Caco-2 (cell line): ENCODE measurements at regions of chr6 and their contacts with region 1.

Region 1: GRCh38 chr6:43798688-43799444 is 28.9 kb downstream of the VEGFA start:
- DNase-seq: peak; percentile 92 to 95
- H3K4me3 ChIP-seq: no peak overlapping the region
- H3K4me3 Mint-ChIP-seq: peak overlapping the region; percentile 44
- H3K27ac Mint-ChIP-seq: peak overlapping the region; percentile 93
- H3K4me1 ChIP-seq: peaks cover 67% of the 10 kb centered on the region
- H3K4me1 Mint-ChIP-seq: peaks cover 70% of the 10 kb centered on the region
- H3K27me3 ChIP-seq: no peaks in the 10 kb centered on the region
- H3K27me3 Mint-ChIP-seq: no peaks in the 10 kb centered on the region
- CTCF ChIP-seq: no peak

Region 2: DNA sequence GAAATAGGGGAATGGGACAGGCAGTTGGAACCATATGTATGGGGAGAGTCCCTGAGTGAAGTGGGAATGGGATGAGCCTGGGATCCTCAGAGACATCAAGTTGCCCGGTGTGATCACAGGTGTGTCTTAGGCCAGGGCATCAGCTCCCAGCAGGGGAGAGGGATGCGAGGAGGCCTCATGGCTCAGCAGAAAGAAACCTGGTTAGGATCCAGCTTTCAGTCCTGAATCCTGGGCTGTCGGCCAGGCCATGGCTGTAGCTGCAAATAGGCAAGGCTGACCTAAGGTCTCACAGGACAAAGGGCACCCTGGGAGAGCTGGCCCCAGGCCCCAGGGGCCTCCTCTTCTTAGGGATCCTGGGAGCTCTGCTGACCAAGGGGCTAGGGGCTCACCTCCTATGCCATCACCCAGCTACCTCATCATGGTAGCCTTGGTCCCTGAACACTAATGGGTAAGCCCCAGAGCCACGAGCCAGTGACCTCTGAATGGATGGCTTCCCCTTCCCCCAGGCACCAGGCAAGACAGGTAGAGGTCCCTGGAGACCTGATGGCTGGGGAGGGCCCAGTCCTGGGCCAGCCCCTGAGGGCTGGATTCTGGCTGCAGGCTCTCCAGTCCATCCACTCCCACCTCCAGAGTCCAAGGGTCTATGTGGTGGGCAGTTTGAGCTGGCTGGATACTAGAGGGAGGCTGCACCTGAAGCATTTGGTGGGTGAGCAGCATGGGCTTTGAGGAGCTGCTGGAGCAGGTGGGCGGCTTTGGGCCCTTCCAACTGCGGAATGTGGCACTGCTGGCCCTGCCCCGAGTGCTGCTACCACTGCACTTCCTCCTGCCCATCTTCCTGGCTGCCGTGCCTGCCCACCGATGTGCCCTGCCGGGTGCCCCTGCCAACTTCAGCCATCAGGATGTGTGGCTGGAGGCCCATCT is 501.0 kb before region 1 on chr6 and contains the start of gene SLC22A7:
- CTCF ChIA-PET with region 1: no interaction called
- POLR2A ChIA-PET with region 1: no interaction called
- intact Hi-C with region 1: no loop called
- DNase-seq: no peak
- H3K4me3 ChIP-seq: no peak within 1 kb of the TSS
- H3K4me3 Mint-ChIP-seq: no peak within 1 kb of the TSS
- H3K27ac Mint-ChIP-seq: no peak within 1 kb of the TSS
- H3K4me1 ChIP-seq: no peaks in the 10 kb centered on the region
- H3K4me1 Mint-ChIP-seq: no peaks in the 10 kb centered on the region
- H3K27me3 ChIP-seq: no peaks in the 10 kb centered on the region
- H3K27me3 Mint-ChIP-seq: no peaks in the 10 kb centered on the region
- CTCF ChIP-seq: no peak
- total RNA-seq, gene SLC22A7: not detected in 2 replicates

Region 3: DNA sequence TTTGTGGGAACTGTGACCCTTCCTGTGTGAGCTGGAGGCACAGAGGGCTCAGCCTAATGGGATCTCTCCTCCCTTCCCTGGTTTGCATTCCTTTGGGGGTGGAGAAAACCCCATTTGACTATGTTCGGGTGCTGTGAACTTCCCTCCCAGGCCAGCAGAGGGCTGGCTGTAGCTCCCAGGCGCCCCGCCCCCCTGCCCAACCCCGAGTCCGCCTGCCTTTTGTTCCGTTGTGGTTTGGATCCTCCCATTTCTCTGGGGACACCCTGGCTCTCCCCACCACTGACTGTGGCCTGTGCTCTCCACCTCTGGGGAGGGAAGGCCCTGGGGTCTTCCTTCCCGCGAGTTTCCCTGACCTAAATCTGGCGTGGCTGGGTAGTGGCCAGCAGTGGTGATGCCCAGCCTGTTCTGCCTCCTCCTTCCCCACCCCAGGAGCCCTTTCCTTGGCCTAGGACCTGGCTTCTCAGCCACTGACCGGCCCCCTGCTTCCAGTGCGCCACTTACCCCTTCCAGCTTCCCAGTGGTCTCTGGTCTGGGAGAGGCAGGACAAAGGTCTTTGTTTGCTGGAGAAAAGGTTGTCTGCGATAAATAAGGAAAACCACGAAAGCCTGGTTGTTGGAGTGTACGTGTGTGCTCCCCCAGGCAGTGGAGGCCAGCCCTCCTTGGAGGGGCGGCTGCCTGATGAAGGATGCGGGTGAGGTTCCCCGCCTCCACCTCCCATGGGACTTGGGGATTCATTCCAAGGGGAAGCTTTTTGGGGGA is 23.9 kb before region 1 on chr6:
- CTCF ChIA-PET with region 1: interaction called, 7 read pairs
- POLR2A ChIA-PET with region 1: interaction called, 13 read pairs
- intact Hi-C with region 1: loop called (anchors 1 kb)
- DNase-seq: peak; percentile 69 to 77
- H3K4me3 ChIP-seq: no peak overlapping the region
- H3K4me3 Mint-ChIP-seq: peak overlapping the region; percentile 96
- H3K27ac Mint-ChIP-seq: peak overlapping the region; percentile 97
- H3K4me1 ChIP-seq: peaks cover 27% of the 10 kb centered on the region
- H3K4me1 Mint-ChIP-seq: peaks cover 7% of the 10 kb centered on the region
- H3K27me3 ChIP-seq: no peaks in the 10 kb centered on the region
- H3K27me3 Mint-ChIP-seq: no peaks in the 10 kb centered on the region
- CTCF ChIP-seq: peak; percentile 91 to 95